ENCODE measurements at regions of chr17 and their contacts with region 1.

Region 1: DNA sequence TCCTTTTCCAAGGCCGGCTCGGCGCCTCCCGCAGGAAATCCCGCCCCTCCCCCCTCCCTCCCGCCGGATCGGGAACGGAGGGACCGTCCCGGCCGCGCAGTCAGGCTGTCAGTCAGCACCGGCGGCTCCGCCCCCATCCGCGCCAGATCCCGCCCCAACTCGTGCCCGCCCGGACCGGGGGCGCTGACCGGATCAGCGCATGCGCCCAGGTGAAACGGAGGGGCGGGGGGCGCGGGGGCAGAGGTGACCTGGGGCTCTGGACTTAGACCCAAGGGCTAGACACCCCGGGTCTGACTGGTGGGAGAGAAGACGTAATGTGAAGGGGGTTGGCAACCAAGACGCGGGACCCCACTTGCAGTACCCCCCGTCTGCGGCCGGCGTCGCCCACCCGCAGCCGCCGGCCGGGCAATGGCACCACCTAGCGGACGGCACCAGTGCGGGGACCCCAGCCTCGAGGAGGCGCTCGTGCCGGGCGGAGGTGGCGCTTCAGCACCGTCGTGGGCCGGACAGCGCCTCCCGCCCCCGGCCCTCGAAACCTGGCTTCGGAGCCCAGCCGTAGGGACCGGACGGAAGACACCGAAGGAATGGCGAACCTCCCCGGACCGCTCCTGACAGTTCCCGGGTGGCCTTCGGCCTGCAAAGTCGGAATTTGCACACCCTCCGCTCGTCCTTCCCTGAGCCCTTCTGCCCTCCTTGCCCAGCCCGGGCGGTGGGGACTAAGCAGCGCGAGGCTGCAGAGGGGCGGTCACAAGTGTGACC is at the start of gene CASKIN2:
- DNase-seq: peak; percentile 98
- ATAC-seq: peak; percentile 86
- H3K4me3 ChIP-seq: peak within 1 kb of the TSS; percentile 87
- H3K27ac ChIP-seq: peak within 1 kb of the TSS; percentile 73
- H3K4me1 ChIP-seq: peaks cover 34% of the 10 kb centered on the region
- H3K27me3 ChIP-seq: no peaks in the 10 kb centered on the region
- CTCF ChIP-seq: peak; percentile 93
- total RNA-seq, gene CASKIN2: 101 TPM

Region 2: DNA sequence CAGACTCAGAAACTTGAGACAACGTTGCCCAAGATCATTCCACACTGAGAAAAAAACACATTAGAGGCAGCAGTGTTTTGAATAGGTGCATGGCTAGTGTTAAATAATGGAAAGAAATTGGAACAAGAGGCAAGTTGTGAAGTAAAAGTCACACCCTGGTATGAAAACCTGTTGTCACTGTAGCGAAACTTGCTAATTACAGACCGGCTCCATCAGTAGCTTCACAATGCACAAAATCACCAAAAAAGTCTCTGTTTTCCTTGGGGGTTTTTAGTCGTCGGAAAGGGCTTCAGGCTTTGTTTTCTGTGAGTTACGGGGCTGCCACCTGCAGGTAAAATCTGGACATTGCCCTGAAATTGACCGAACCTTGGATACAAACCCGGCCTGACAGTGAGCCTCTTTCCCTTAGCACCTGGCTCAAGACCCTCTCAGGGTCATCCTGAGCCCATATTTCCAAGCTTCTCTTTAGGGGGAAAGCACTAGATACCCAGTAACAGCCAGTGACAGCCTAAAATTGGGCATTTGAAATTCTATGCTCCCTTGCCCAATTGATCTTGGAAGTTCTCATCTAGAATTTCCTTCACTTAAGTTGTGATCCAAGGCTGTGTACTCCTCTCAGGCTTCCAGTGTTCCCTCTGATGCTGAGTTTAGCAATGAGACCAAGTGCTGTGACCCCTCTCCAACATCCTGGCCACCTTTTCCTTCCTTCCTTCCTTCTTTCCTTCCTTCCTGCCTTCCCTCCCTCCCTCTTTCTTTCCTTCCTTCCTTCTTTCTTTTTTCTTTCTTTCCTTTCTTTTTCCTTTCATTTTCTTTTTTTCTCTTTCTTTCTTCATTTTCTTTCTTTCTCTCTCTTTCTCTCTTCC is 103.0 kb before region 1 on chr17:
- intact Hi-C with region 1: no loop called
- DNase-seq: no peak
- ATAC-seq: peak; percentile 89
- H3K4me3 ChIP-seq: peak overlapping the region; percentile 20
- H3K27ac ChIP-seq: no peak overlapping the region
- H3K4me1 ChIP-seq: peaks cover 11% of the 10 kb centered on the region
- H3K27me3 ChIP-seq: no peaks in the 10 kb centered on the region
- CTCF ChIP-seq: peak; percentile 75

Region 3: GRCh38 chr17:75428543-75429469 is 86.9 kb before region 1 on chr17:
- intact Hi-C with region 1: loop called (anchors 10 kb)
- DNase-seq: no peak
- ATAC-seq: no peak
- H3K4me3 ChIP-seq: no peak overlapping the region
- H3K27ac ChIP-seq: no peak overlapping the region
- H3K4me1 ChIP-seq: peaks cover 4% of the 10 kb centered on the region
- H3K27me3 ChIP-seq: no peaks in the 10 kb centered on the region
- CTCF ChIP-seq: no peak

Region 4: GRCh38 chr17:75456417-75457046 is 59.1 kb before region 1 on chr17 and contains the start of gene TMEM94:
- intact Hi-C with region 1: no loop called
- DNase-seq: peak; percentile 95
- ATAC-seq: peak; percentile 98
- H3K4me3 ChIP-seq: peak within 1 kb of the TSS; percentile 99
- H3K27ac ChIP-seq: peak within 1 kb of the TSS; percentile 95
- H3K4me1 ChIP-seq: peaks cover 24% of the 10 kb centered on the region
- H3K27me3 ChIP-seq: no peaks in the 10 kb centered on the region
- CTCF ChIP-seq: no peak
- total RNA-seq, gene TMEM94: 79.1 TPM

Measured in upper lobe of right lung (tissue), 1 donor.